Vagina (tissue), 2 donors: ENCODE measurements at regions of chr7 and their contacts with region 1.

Region 1: DNA sequence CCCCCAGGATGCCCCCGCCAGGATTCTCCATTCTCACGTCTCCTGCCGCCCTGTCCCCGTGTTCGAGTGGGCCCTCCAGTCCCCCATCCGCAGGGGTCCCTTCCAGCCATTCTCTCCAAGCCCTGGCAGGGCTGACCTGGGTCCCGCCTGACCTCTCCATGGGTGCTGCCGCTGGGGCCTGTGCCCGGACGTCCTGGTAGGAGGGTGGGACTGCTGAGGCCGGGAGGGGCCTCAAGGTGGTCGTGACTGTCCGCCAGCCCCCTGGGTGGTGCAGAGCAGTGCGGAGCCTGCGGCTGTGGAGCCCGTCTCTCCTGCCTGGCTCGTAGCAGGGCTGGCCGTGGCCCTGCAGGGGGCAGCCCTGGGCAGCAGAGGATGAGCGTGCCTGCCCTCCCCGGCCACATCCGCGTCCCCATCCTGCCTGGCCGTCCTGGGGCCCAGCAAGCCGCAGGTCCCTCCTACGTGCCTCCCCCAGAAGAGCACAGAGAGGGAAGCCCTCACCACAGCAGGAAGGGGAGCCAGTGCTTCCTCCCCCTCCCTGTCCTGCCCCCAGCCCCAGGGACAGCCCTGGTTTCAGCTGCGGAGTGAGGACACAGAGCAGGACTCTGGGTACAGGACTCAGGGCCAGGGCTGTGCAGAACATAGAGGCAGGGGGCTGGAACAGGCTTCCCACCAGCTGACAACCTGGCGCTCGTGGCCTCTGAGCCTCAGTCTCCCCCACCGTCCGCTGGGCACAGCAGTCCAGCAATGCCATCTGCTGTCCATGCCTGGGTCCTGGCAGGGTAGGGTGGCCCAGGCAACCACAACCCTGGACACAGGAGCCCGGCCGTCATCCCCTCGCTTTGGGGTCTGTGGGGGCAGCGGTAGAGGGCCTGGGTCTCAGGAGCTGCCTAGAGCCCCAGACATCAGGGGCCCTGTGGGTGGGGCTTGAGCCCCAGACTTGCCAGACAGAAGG is 1.5 kb upstream of the GRIFIN start:
- DNase-seq: no peak
- H3K4me3 ChIP-seq: no peak overlapping the region
- H3K27ac ChIP-seq: no peak overlapping the region
- H3K4me1 ChIP-seq: peaks cover 15% of the 10 kb centered on the region
- H3K27me3 ChIP-seq: no peaks in the 10 kb centered on the region
- CTCF ChIP-seq: peak; percentile 46 to 73 (median 71)
- POLR2A ChIP-seq: no peak

Region 2: DNA sequence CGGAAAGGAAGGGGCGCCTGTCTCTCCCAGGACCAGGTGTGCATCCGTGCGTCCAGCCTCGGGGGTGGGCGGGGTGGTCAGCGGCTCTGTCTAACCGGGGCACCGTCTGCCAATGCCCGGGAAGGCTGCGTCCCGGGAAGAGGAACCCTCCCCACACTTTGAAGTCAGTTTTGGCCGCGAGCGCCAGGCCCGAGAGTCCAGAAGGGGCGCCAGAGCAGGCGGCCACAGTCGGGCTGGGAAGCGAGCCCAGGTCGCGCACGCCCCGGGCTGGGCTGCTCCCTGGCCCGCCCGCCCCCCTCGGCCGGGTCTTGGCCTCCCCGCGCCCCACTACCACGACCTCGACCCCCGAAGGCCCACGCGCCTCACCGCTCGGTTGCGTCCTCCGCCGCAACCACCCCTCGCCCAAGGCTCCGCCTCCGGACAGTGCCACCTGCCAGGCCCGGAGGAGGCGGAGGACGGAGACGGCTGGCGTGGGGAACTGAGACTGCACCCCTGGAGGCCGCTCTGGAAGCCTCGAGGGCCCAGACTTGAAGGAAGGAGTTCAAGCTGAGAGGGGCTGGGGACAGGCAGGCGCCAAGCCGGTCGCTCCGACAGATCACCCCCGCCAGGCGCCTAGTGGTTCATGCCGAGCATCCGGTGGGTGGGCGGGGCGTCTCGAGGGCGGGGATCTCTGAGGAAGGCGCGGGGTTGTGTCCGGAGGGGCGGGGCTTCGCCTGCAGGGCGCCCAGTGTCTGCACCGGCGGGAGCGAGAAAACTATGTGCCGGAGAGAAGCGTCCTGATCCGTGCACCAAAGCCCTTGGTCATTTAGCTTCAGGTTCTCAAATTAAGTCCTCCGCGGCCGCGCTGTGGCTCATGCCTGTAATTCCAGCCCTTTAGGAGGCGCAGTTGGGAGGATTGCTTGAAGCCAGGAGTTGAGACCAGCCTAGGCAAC is 77.7 kb after region 1 on chr7 and contains the start of gene BRAT1:
- intact Hi-C with region 1: loop called (anchors 5 kb)
- DNase-seq: peak in 1 of 2 donors; percentile 94
- H3K4me3 ChIP-seq: peak within 1 kb of the TSS; percentile 68 to 74
- H3K27ac ChIP-seq: peak within 1 kb of the TSS; percentile 95
- H3K4me1 ChIP-seq: peaks cover 52% of the 10 kb centered on the region
- H3K27me3 ChIP-seq: no peaks in the 10 kb centered on the region
- CTCF ChIP-seq: peak in 1 of 3 experiments; percentile 18
- POLR2A ChIP-seq: peak in 1 of 2 donors; percentile 49
- total RNA-seq, gene BRAT1: 66.0 TPM

Region 3: GRCh38 chr7:2680792-2681490 is 203.2 kb after region 1 on chr7:
- intact Hi-C with region 1: loop called (anchors 10 kb)
- DNase-seq: no peak
- H3K4me3 ChIP-seq: no peak overlapping the region
- H3K27ac ChIP-seq: no peak overlapping the region
- H3K4me1 ChIP-seq: peaks cover 21% of the 10 kb centered on the region
- H3K27me3 ChIP-seq: no peaks in the 10 kb centered on the region
- CTCF ChIP-seq: peak; percentile 30 to 75 (median 44)
- POLR2A ChIP-seq: no peak